ENCODE measurements at regions of chr17 and their contacts with region 1.

Region 1: GRCh38 chr17:45135192-45135977 is at the start of gene ACBD4:
- DNase-seq: peak; percentile 97
- ATAC-seq: peak; percentile 92
- total RNA-seq, gene ACBD4: 26.4 TPM

Region 2: DNA sequence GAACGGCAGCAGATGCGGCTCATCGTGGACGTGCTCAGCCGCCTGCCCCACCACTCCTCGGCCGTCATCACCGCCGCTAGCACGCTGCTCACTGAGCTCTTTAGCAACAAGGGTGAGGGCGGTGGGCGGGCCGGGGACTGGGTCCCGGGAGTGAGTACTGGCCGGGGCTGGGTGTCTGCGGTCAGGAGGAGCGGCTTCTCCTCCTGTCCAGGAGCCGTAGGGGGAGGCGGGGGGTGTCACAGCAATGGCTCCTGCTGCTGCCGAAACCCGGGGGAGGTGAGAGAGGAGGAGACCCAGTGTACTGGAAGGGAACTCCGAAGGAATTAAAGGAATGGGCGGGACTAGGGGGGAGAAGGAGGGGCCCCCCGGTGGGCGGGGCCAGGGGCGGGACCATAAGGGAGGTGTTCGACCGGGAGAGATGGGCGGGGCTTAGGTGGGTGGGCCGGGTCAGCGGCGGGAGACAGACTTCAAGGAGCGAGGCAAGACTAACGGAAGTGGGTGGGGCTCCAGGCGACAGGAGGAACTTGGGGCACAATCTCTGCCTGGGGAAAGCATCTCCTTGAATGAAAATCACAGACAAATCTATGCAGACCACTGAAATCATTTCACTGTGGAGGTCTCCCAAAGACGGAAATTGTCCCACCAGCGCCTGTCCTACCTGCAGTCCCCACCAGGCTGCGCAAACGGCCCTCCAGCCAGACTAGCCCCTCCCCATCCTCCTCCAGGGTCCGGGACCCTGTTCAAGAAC is 1128.6 kb before region 1 on chr17:
- intact Hi-C with region 1: no loop called
- DNase-seq: peak; percentile 98
- ATAC-seq: peak; percentile 95

Region 3: GRCh38 chr17:44672479-44673093 is 462.8 kb before region 1 on chr17:
- intact Hi-C with region 1: no loop called
- DNase-seq: no peak
- ATAC-seq: no peak

Region 4: GRCh38 chr17:44758414-44759085 is 376.8 kb before region 1 on chr17 and contains the start of gene ADAM11:
- intact Hi-C with region 1: no loop called
- DNase-seq: no peak
- ATAC-seq: peak; percentile 30
- total RNA-seq, gene ADAM11: 0.53 TPM

Region 5: GRCh38 chr17:44775136-44775837 is 360.1 kb before region 1 on chr17:
- intact Hi-C with region 1: loop called (anchors 10 kb)
- DNase-seq: no peak
- ATAC-seq: peak; percentile 95

Region 6: GRCh38 chr17:44919885-44920564 is 215.4 kb before region 1 on chr17:
- intact Hi-C with region 1: loop called (anchors 10 kb)
- DNase-seq: peak; percentile 85
- ATAC-seq: peak; percentile 95

Region 7: DNA sequence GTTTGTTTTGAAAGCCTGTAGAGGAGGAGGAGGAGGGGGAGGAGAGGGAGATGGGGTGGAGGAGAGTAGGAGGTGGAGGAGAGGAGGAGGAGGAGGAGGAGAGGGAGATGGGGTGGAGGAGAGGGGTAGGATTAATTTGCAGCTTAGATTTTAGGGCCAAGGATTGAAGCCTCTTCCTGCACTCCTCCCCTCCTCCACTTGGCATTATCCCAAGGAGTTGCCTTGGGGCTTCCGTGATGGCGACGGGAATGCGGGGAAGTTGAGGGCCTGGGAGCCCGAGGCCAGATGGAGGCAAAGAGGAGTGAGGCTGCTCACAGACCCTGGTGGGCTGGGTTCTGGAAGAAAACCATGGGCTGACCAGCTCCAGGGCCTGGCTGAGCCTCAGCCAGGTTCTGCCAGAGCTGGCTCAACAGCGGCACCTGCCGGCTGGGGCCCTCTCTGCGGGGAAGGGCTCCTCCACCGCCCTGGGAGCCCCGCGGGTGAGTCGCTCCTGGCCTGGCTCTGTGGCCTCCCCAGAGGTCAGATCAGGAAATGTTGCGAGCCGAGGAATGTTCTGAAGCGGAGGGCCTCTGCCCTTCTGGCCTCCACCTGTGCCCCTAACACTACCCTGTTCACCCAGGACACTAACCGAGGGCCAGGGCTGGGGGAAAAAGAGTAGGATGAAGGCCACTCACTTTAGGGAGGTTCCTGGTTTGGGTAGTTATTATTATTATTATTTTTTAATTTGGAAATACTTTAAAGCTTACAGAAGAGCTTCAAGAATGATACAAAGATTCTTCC is 62.4 kb after region 1 on chr17:
- intact Hi-C with region 1: loop called (anchors 5 kb)
- DNase-seq: peak; percentile 96
- ATAC-seq: peak; percentile 92

Measured in sciatic nerve (tissue), 2 donors.